Activated CD4-positive, alpha-beta T cell treated with anti-CD3 and anti-CD28 coated beads, Interleukin-2, amount 10 ng/mL, durations not matched to agents 24 days and 14 days (primary cell): ENCODE measurements at regions of chr3 and their contacts with region 1.

Region 1: DNA sequence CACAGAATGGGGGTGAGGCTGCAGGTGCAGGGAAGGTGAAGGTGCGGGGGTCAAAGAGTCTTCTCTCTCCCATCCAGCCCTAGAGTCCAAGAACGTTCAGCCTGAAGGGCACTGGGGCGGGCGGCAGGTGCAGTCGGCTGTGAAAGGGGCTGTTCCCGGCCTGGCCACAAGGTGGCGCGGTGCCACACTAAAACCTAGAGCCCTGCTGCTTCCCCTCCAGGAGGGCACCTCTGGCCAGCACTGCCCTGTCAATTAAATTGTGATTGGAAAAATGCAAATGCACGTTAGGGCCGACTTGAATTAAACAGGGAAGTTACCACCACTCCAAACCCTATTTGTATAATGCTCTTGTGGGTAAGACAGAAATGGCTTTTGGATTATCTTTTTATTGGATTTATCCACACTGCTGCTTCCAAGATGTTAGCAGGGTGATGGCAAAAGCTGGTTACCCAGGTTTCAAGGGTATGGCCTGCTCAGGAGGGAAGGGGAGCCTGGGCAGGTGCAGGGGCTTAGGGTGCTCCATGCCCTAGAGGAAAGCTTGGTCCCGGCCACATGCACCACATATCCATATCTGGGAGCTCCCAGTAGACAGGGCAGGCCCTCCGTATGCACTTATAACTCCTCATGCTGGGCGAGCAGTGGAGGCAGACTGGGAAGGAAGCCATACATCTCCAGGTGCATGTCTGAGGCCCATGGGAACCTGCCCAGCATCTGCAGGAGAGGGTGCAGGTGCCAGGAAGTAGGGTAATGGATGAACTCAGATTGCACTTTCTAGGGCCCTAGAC is 119.8 kb downstream of the ADCY5 start:
- DNase-seq: peak; percentile 91
- H3K4me3 Mint-ChIP-seq: no peak overlapping the region
- H3K27ac Mint-ChIP-seq: no peak overlapping the region
- H3K4me1 Mint-ChIP-seq: no peaks in the 10 kb centered on the region
- H3K27me3 Mint-ChIP-seq: no peaks in the 10 kb centered on the region

Region 2: GRCh38 chr3:123489400-123490004 is 160.5 kb after region 1 on chr3:
- intact Hi-C with region 1: loop called (anchors 1 kb)
- DNase-seq: peak; percentile 84
- H3K4me3 Mint-ChIP-seq: no peak overlapping the region
- H3K27ac Mint-ChIP-seq: no peak overlapping the region
- H3K4me1 Mint-ChIP-seq: no peaks in the 10 kb centered on the region
- H3K27me3 Mint-ChIP-seq: no peaks in the 10 kb centered on the region

Region 3: GRCh38 chr3:123559040-123559861 is 230.2 kb after region 1 on chr3:
- intact Hi-C with region 1: loop called (anchors 2 kb)
- DNase-seq: peak; percentile 75
- H3K4me3 Mint-ChIP-seq: no peak overlapping the region
- H3K27ac Mint-ChIP-seq: no peak overlapping the region
- H3K4me1 Mint-ChIP-seq: peaks cover 6% of the 10 kb centered on the region
- H3K27me3 Mint-ChIP-seq: no peaks in the 10 kb centered on the region

Region 4: DNA sequence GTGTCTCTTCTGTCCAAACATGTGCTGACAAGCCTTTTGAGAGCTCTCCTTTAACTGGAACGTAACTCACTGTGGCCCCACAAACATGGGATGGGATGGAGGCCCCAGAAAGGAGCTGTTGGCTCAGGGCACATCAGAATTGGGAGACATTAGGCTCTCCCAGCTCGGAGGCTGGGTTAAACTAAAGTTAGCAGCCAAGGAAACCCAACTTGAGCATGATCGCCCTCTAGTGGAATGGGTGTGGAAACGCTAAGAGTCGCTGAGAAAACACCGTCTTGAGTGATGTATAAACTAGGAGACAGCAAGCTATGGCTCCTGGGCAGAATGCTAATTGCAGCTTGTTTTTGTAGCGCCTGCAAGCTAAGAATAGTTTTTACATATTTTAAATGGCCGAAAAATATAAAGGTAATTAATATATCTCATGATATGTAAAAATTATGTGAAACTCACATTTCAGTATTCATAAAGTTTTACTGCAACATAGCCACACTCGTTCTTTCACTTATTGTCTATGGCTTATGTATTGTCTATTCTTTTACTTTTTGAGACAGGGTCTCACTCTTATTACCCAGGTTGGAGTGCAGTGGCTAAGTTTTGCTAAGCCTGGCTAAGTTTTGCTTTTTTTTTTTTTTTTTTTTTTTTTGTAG is 394.6 kb after region 1 on chr3:
- intact Hi-C with region 1: loop called (anchors 10 kb)
- DNase-seq: peak; percentile 86
- H3K4me3 Mint-ChIP-seq: no peak overlapping the region
- H3K27ac Mint-ChIP-seq: peak overlapping the region; percentile 47
- H3K4me1 Mint-ChIP-seq: peaks cover 2% of the 10 kb centered on the region
- H3K27me3 Mint-ChIP-seq: peaks cover 6% of the 10 kb centered on the region